Breast epithelium (tissue), 4 donors: ENCODE measurements at regions of chr19 and their contacts with region 1.

Region 1: GRCh38 chr19:4369888-4370260 is 26.5 kb downstream of the MPND start:
- DNase-seq: no peak
- H3K4me3 ChIP-seq: peak overlapping the region; percentile 9 to 62 (median 41)
- H3K27ac ChIP-seq: peak overlapping the region; percentile 82 to 92
- H3K4me1 ChIP-seq: peaks cover 38 to 63% of the 10 kb centered on the region in 2 donors
- H3K27me3 ChIP-seq: no peaks in the 10 kb centered on the region
- CTCF ChIP-seq: peak in 2 of 3 donors; percentile 25 to 45
- POLR2A ChIP-seq: no peak

Region 2: DNA sequence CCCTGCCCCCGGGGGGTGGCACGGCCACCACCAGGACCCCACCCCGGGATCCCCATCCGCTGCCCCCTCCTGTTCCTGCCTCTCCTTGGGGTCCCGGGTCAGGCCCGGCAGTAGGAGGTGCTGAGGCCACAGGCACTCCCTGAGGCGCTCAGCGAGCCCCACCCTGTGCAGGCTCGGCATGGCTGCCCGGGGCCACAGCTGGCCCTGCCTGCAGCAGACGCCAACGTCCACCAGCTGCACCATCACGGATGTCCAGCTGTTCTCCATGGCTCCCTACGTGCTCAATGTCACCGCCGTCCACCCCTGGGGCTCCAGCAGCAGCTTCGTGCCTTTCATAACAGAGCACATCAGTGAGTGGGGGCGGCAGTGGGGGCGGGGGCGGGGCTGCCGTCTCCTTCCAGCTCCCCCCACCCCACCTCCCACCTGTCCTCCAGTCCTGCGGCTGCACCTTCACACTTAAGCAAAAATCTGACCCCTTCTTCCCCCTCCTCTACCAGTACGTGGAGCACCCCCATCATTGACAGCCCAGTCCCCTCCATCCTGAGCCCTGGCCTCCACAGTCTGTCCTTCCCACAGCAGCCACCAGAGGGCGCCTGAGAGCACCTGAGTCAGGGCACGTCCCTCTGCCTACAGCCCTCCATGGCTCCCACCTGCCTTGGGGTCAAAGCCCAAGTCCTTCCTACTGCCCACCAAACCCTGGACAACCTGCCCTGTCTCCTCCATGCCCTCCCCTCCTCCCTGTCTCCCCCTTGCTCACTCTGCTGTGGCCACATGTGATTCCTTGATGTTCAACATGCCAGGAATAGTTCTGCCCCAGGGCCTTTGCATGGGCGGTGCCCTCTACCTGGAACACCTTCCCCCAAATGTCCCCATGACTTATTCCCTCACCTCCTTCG is 136.7 kb before region 1 on chr19:
- intact Hi-C with region 1: no loop called
- DNase-seq: no peak
- H3K4me3 ChIP-seq: no peak overlapping the region
- H3K27ac ChIP-seq: no peak overlapping the region
- H3K4me1 ChIP-seq: no peaks in the 10 kb centered on the region
- H3K27me3 ChIP-seq: peaks cover 5 to 52% of the 10 kb centered on the region in 2 donors
- CTCF ChIP-seq: peak in 2 of 3 donors; percentile 28 to 38
- POLR2A ChIP-seq: no peak

Region 3: DNA sequence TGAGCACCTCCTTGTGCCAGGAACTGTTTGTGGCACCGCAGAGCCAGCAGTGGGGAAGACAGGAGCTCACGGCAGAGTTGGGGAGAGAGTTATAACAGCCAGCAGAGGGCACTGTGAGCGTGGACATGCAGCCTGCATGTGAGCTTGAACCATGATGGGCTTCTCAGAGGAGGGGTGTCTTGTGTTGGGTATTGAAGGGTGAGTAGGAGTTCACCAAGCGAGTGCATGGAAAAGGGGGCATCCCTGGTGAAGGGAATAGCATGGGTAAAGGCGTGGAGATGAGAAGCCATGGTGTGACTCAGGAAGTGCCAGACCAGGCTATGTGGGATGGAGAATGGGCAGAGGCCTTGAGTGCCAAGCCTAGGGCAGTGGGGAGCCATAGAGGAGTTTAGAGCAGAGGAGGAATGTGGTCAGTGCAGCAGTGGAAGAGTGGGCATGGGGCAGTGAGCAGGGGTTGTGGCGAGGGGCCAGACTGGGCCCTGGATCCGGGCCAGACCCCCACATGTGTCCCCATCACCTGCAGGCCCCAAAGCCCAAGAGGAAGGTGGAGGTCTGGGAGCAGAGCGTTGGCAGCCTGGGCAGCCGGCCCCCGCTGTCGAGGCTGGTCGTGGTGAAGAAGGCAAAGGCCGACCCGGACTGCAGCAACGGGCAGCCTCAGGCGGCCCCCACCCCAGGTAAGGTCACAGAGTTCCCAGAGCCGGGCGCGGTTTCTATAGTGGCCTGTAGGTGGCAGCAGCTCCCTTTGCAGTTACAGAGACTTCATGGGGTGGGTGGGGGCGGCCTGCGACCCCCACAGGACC is 102.6 kb before region 1 on chr19:
- intact Hi-C with region 1: loop called (anchors 10 kb)
- DNase-seq: peak in 1 of 2 donors; percentile 32
- H3K4me3 ChIP-seq: no peak overlapping the region
- H3K27ac ChIP-seq: peak overlapping the region in 1 of 2 donors; percentile 9
- H3K4me1 ChIP-seq: no peaks in the 10 kb centered on the region
- H3K27me3 ChIP-seq: no peaks in the 10 kb centered on the region
- CTCF ChIP-seq: peak; percentile 66 to 78 (median 74)
- POLR2A ChIP-seq: no peak

Region 4: DNA sequence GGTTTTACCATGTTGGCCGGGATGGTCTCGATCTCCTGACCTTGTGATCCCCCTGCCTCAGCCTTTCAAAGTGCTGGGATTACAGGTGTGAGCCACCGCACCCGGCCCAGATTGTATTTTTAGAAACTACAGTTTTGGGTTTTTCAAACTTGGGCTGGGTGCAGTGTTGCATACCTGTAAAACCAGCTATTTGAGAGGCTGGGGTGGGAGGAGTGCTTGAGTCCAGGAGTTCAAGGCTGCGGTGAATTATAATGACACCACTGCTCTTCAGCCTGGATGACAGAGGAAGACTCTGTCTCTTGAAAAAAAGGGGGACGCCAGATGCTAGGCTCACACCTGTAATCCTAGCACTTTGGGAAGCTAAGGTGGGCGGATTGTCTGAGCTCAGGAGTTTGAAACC is 36.8 kb after region 1 on chr19:
- intact Hi-C with region 1: loop called (anchors 1 kb)
- DNase-seq: no peak
- H3K4me3 ChIP-seq: no peak overlapping the region
- H3K27ac ChIP-seq: no peak overlapping the region
- H3K4me1 ChIP-seq: peaks cover 8% of the 10 kb centered on the region in 2 donors
- H3K27me3 ChIP-seq: no peaks in the 10 kb centered on the region
- CTCF ChIP-seq: no peak
- POLR2A ChIP-seq: no peak

Region 5: GRCh38 chr19:5719961-5720790 is 1350.3 kb after region 1 on chr19 and contains the starts of genes CATSPERD and LONP1:
- intact Hi-C with region 1: loop called (anchors 10 kb)
- DNase-seq: peak; percentile 98
- H3K4me3 ChIP-seq: peak within 1 kb of the TSS; percentile 83 to 99 (median 98)
- H3K27ac ChIP-seq: peak within 1 kb of the TSS; percentile 95 to 97
- H3K4me1 ChIP-seq: peaks cover 0 to 14% of the 10 kb centered on the region in 2 donors
- H3K27me3 ChIP-seq: no peaks in the 10 kb centered on the region
- CTCF ChIP-seq: peak; percentile 89 to 98 (median 94)
- POLR2A ChIP-seq: peak; percentile 42
- total RNA-seq, gene CATSPERD: not detected
- total RNA-seq, gene LONP1: 48.1 to 66.2 (median 60.6) TPM